ENCODE measurements at regions of chr12 and their contacts with region 1.

Region 1: DNA sequence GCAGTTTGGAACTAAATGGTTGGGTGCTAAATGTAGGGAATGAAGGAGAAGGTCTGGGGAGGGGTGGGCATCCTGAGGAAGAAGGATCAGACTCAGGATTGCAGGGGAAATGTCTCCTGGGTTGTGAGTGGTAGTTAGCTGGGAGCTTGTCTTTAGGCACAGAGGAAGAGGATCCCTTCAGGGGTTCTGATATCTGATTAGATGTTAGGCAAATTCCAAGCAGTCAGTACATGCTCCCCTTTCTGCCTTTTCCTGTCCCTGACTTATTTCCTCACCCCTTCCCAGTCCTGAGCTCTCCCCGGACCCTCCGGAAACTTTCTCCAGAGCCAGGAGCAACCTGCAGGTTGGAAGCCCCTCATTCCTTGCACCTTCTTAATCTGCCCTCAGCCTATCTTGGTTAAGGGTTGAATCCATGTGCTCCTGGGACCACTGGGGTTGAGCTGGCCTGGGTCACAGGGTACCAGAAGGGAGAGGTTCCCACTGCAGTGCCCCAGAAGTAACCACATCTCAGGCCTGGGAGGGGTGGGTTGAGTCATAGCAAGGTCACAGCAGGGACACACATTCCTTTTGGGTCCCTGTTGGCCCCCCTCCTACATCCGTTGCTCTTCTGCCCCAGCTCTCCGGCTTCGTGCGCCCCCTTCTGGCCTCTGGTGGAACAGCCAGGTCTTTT is 1.6 kb downstream of the IGFBP6 start:
- DNase-seq: peak; percentile 90 to 96 (median 90)
- H3K4me3 ChIP-seq: no peak overlapping the region
- H3K4me3 Mint-ChIP-seq: peak overlapping the region; percentile 43 to 94
- H3K27ac ChIP-seq: no peak overlapping the region
- H3K27ac Mint-ChIP-seq: peak overlapping the region in 6 of 7 donors; percentile 36 to 85 (median 63)
- H3K4me1 ChIP-seq: peaks cover 64 to 65% of the 10 kb centered on the region in 2 donors
- H3K4me1 Mint-ChIP-seq: peaks cover 56% of the 10 kb centered on the region
- H3K27me3 ChIP-seq: peaks cover 15 to 24% of the 10 kb centered on the region in 2 donors
- H3K27me3 Mint-ChIP-seq: peaks cover 29 to 35% (median 34%) of the 10 kb centered on the region in 3 donors
- CTCF ChIP-seq: peak; percentile 94

Region 2: DNA sequence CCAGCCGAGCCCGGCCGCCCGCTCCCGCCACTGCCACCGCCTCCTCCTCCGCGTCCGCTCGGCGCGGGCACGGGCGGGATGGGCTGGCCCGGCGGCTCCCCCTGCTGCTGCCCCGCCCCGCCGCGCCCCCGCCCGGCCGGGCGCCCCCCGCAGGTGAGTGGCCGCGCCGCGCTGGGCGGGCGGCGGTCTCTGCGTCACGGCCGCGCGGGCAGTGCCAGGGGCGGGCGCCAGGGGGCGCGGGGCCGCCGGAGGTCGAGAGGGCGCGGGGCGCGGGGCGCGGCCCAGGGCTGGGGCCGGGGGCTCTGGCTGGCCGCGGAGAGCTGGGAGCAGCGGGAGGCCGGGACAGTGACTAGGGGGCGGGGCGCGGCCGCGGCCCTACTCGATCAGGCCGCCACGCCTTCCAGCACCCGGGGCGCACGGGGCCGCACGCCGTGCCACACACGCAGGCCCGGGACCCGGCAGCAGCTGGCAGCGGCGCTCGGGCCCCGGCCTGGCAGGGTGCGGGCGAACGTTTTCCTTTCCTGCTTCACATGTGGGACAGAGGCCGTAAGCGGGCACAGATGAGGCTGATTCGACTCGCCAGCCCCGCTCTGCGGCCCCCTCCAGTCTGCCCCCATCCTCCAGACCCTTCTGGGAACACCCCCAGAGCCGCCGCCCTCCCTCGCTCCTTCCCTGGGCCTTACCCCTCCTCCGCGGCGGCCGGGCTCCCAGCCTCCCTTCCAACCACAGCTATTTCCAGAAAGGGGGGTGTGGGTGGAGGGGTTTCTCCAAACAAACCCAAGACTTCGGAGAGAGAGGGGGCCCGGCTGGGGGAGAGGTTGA is 51.7 kb before region 1 on chr12:
- intact Hi-C with region 1: loop called in 1 of 2 experiments (anchors 10 kb)
- DNase-seq: peak; percentile 34 to 60 (median 47)
- H3K4me3 ChIP-seq: peak overlapping the region; percentile 50 to 89 (median 69)
- H3K4me3 Mint-ChIP-seq: peak overlapping the region; percentile 51 to 61
- H3K27ac ChIP-seq: no peak overlapping the region
- H3K27ac Mint-ChIP-seq: no peak overlapping the region
- H3K4me1 ChIP-seq: peaks cover 12 to 16% of the 10 kb centered on the region in 2 donors
- H3K4me1 Mint-ChIP-seq: peaks cover 15% of the 10 kb centered on the region
- H3K27me3 ChIP-seq: peaks cover 0 to 18% of the 10 kb centered on the region in 2 donors
- H3K27me3 Mint-ChIP-seq: peaks cover 24 to 44% (median 25%) of the 10 kb centered on the region in 3 donors
- CTCF ChIP-seq: peak; percentile 31

Region 3: DNA sequence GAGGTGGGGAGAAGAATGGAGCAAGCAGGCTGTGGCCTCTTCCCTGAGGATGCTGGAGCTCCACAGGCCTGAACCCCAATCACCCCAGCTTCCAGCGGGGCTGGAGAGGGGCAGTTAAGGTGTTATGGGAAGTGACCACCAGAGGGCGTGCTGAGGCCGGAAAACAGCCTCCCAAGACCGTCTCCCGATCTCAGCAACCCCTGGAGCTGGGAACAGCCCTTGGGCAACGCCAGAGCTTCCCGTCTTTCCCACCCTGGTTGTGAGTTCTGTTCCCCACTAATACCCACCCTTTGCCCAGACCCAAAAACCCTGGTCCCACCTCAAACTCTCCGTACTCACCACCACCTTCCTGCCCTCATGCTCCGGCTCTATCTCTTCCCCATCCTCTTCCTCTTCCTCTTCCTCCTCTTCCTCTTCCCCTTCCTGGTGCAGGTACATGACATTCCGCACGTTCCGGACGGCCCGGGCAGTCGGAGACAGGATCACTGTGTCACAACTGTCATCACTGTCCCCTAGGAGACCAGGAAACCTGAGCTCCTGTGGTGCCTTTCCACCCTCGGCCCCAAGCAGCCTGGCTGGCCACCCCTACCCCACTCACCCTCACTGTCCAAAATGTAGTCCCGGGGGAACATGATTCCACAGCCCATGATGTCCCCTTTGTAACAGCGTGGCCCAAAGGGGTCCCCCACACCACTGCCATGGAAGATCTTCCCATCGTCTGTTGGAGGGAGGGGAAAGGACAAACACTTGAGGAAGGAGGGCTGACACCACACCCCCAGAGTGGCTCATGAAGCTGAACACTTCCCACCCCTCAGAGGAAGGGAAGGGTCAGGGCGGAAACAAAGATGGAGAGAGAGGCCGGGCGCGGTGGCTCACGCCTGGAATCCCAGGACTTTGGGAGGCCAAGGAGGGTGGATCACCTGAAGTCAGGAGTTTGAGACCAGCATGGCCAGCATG is 32.9 kb before region 1 on chr12:
- intact Hi-C with region 1: loop called (anchors 1 to 5 kb)
- DNase-seq: peak; percentile 54 to 72 (median 67)
- H3K4me3 ChIP-seq: no peak overlapping the region
- H3K4me3 Mint-ChIP-seq: peak overlapping the region in 1 of 2 donors; percentile 17
- H3K27ac ChIP-seq: no peak overlapping the region
- H3K27ac Mint-ChIP-seq: peak overlapping the region in 3 of 7 donors; percentile 23 to 66 (median 48)
- H3K4me1 ChIP-seq: peaks cover 4 to 15% of the 10 kb centered on the region in 2 donors
- H3K4me1 Mint-ChIP-seq: peaks cover 24% of the 10 kb centered on the region
- H3K27me3 ChIP-seq: no peaks in the 10 kb centered on the region
- H3K27me3 Mint-ChIP-seq: peaks cover 0 to 1% (median 1%) of the 10 kb centered on the region in 3 donors
- CTCF ChIP-seq: peak; percentile 96

Region 4: DNA sequence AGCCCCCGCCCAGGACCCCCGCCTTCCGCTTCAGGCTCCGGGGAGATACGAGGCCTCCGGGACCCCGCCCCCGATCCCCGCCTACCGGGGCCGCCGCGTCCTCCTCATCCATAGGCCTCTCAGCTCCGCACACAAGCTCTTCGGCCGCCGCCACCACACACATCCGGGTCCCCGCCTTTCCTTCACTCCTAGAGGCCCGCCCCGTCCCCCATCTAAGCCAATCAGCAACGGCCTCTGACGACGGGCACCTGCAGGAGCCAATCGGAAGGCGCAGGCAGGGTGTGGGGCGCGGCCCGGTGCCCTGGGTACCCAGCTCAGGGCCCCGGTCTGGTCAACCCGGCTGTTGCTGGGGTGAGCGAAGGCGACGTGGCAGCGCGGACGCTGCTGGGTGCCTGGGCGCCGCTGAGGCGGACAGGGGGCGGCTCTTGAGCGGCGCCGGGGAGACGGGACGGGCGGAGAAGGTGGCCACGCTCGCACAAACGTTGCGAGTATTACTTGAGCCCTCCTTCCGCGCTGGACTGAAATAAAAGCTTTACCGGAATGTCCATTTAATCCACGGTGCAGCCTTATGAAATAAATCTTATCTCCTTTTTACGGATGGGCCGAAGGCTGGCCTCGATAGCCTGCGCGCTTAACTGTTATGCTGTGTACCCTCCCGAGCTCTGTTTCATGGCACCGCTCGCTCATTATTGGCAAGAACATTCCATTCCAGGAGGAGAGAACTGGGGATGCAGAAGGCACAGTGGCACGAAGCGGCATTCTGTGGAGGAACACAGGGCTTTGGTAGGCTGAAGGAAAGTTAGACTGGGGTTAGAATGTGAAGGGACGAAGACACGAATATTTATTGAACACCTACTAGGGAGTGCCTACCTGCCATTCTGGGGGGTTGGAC is 19.6 kb before region 1 on chr12 and contains the start of gene SPRYD3:
- intact Hi-C with region 1: loop called in 1 of 2 experiments (anchors 2 kb)
- DNase-seq: peak; percentile 95 to 97 (median 95)
- H3K4me3 ChIP-seq: peak within 1 kb of the TSS; percentile 54 to 87 (median 68)
- H3K4me3 Mint-ChIP-seq: peak within 1 kb of the TSS; percentile 80 to 90
- H3K27ac ChIP-seq: peak within 1 kb of the TSS; percentile 71 to 83
- H3K27ac Mint-ChIP-seq: peak within 1 kb of the TSS; percentile 66 to 91 (median 85)
- H3K4me1 ChIP-seq: peaks cover 18 to 30% of the 10 kb centered on the region in 2 donors
- H3K4me1 Mint-ChIP-seq: peaks cover 27% of the 10 kb centered on the region
- H3K27me3 ChIP-seq: no peaks in the 10 kb centered on the region
- H3K27me3 Mint-ChIP-seq: peaks cover 0 to 4% (median 4%) of the 10 kb centered on the region in 3 donors
- CTCF ChIP-seq: no peak
- polyA plus RNA-seq, gene SPRYD3: 17.8 to 26.9 (median 21.8) TPM

Region 5: GRCh38 chr12:53129170-53129569 is 30.1 kb after region 1 on chr12:
- intact Hi-C with region 1: no loop called
- DNase-seq: peak; percentile 8 to 55 (median 38)
- H3K4me3 ChIP-seq: peak overlapping the region in 1 of 3 experiments; percentile 22
- H3K4me3 Mint-ChIP-seq: peak overlapping the region in 1 of 2 donors; percentile 64
- H3K27ac ChIP-seq: no peak overlapping the region
- H3K27ac Mint-ChIP-seq: peak overlapping the region; percentile 16 to 90 (median 64)
- H3K4me1 ChIP-seq: peaks cover 38 to 44% of the 10 kb centered on the region in 2 donors
- H3K4me1 Mint-ChIP-seq: peaks cover 41% of the 10 kb centered on the region
- H3K27me3 ChIP-seq: no peaks in the 10 kb centered on the region
- H3K27me3 Mint-ChIP-seq: peaks cover 3% of the 10 kb centered on the region in 3 donors
- CTCF ChIP-seq: no peak

Region 6: DNA sequence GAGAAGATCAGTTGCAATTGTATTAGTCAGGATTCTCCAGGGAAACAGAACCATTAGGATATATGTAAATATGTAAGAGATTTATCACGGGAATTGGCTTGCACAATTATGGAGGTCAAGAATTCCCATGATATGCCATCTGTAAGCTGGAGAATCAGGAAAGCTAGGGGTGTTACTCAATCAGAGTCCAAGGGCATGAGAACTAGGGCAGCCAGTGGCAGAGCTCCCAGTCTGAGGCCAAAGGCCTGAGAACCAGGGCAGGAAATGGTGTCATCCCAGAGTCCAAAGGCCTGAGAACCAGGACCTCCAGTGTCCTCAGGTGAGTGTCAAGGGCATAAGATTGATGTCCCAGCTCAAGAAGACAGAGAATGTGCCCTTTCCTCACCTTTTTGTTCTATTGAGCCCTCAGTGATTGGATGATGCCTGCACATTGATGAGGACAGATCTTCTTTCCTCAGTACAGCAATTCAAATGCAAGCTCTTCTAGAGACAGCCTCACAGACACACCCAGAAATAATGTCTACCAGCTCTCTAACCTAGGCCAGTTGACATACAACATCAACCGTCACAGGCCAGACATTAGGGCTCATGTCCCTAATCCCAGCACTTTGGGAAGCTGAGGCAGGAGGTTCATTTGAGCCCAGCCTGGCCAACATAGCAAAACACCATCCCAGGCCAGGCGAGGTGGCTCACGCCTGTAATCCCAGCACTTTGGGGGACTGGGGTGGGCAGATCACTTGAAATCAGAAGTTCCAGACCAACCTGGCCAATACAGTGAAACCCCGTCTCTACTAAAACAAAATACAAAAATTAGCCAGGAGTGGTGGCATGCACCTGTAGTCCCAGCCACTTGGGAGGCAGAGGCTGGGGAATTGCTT is 46.5 kb after region 1 on chr12:
- intact Hi-C with region 1: no loop called
- DNase-seq: no peak
- H3K4me3 ChIP-seq: no peak overlapping the region
- H3K4me3 Mint-ChIP-seq: no peak overlapping the region
- H3K27ac ChIP-seq: no peak overlapping the region
- H3K27ac Mint-ChIP-seq: no peak overlapping the region
- H3K4me1 ChIP-seq: no peaks in the 10 kb centered on the region
- H3K4me1 Mint-ChIP-seq: no peaks in the 10 kb centered on the region
- H3K27me3 ChIP-seq: no peaks in the 10 kb centered on the region
- H3K27me3 Mint-ChIP-seq: peaks cover 0 to 6% (median 5%) of the 10 kb centered on the region in 3 donors
- CTCF ChIP-seq: no peak

Measured in CD14-positive monocyte (primary cell).